ENCODE measurements at regions of chr5 and their contacts with region 1.

Region 1: GRCh38 chr5:174418928-174419796 is 305.2 kb upstream of the MSX2 start:
- DNase-seq: peak; percentile 83 to 94 (median 91)
- ATAC-seq: peak; percentile 99
- H3K4me3 ChIP-seq: no peak overlapping the region
- H3K27ac ChIP-seq: no peak overlapping the region
- H3K4me1 ChIP-seq: peaks cover 0 to 4% of the 10 kb centered on the region in 2 donors
- H3K27me3 ChIP-seq: peaks cover 6 to 48% of the 10 kb centered on the region in 2 donors
- CTCF ChIP-seq: peak; percentile 80 to 85

Region 2: DNA sequence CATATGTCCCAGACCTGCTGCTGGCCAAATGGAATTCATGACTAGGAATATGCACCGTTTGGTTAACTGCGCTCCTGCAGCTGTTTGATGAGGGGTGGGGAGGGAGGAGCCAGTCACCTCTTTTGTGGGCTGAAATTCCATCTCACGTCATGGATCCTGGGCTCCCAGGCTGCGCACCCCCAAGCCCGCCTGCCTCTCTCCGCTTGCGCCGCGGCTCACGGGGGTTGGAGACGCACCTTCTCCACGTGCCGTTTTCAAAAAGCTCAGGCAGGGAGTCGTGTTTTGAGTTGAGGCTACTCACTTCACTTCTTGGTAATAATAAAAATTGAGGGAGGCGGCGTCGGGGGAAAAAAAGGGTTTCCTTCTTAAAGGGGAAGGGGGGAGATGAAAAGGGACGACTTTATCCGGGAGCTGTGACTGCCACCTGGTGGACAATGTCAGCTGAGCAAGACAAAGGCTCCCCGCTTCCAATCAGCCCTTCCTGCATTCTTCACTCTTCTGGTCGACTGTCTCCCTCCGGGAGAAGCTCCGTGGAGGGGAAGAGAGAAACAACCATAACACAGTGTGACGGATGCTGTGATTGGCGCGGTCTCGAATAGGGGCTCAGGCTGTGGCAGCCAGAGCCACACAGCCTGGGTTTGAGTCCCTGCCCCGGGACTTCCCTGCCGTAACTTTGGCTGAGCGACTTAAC is 446.1 kb before region 1 on chr5:
- intact Hi-C with region 1: no loop called
- DNase-seq: peak in 3 of 4 donors; percentile 86 to 90 (median 87)
- ATAC-seq: peak; percentile 94
- H3K4me3 ChIP-seq: peak overlapping the region; percentile 42 to 43
- H3K27ac ChIP-seq: peak overlapping the region in 1 of 2 donors; percentile 13
- H3K4me1 ChIP-seq: peaks cover 0 to 19% of the 10 kb centered on the region in 2 donors
- H3K27me3 ChIP-seq: peaks cover 0 to 4% of the 10 kb centered on the region in 2 donors
- CTCF ChIP-seq: peak; percentile 79 to 93

Region 3: DNA sequence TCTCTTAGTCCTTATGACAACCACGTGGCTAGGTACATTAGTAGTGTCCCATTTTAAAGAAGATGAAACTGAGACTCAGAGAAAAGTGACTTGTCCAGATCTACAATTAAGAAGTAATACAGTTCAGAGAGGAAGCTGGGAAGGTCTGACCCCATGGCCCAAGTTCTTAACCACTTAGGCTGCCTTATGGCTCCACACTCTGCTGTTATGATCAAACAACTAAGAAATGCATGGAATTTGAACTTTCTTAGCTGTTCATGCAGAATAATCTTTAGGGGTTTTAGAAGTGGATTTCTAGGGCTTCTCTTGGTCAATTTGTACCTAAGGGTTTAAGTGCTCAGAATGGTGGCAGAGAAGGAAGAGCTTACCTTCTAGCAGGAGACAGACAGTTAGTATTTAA is 177.3 kb after region 1 on chr5:
- intact Hi-C with region 1: no loop called
- DNase-seq: no peak
- ATAC-seq: peak; percentile 81
- H3K4me3 ChIP-seq: no peak overlapping the region
- H3K27ac ChIP-seq: no peak overlapping the region
- H3K4me1 ChIP-seq: no peaks in the 10 kb centered on the region
- H3K27me3 ChIP-seq: peaks cover 0 to 34% of the 10 kb centered on the region in 2 donors
- CTCF ChIP-seq: no peak

Region 4: GRCh38 chr5:174608631-174609097 is 189.5 kb after region 1 on chr5:
- intact Hi-C with region 1: no loop called
- DNase-seq: peak in 3 of 4 donors; percentile 61 to 81 (median 75)
- ATAC-seq: peak; percentile 83
- H3K4me3 ChIP-seq: no peak overlapping the region
- H3K27ac ChIP-seq: no peak overlapping the region
- H3K4me1 ChIP-seq: peaks cover 0 to 7% of the 10 kb centered on the region in 2 donors
- H3K27me3 ChIP-seq: peaks cover 0 to 32% of the 10 kb centered on the region in 2 donors
- CTCF ChIP-seq: no peak

Region 5: GRCh38 chr5:174793684-174794328 is 374.6 kb after region 1 on chr5:
- intact Hi-C with region 1: loop called in 1 of 2 experiments (anchors 5 kb)
- DNase-seq: peak; percentile 44 to 87 (median 64)
- ATAC-seq: peak; percentile 95
- H3K4me3 ChIP-seq: no peak overlapping the region
- H3K27ac ChIP-seq: no peak overlapping the region
- H3K4me1 ChIP-seq: no peaks in the 10 kb centered on the region
- H3K27me3 ChIP-seq: peaks cover 0 to 53% of the 10 kb centered on the region in 2 donors
- CTCF ChIP-seq: peak; percentile 71 to 78

Measured in left lung (tissue), 14 donors.